ENCODE measurements at regions of chr3 and their contacts with region 1.

Region 1: GRCh38 chr3:14829811-14830210 is 11.0 kb downstream of the FGD5 start:
- DNase-seq: no peak
- H3K4me3 ChIP-seq: no peak overlapping the region
- CTCF ChIP-seq: no peak

Region 2: GRCh38 chr3:14651440-14652251 is 178.2 kb before region 1 on chr3 and contains the start of gene CCDC174:
- in situ Hi-C with region 1: no loop called
- DNase-seq: peak; percentile 96
- H3K4me3 ChIP-seq: peak within 1 kb of the TSS; percentile 98
- CTCF ChIP-seq: no peak

Region 3: GRCh38 chr3:14787630-14788029 is 42.2 kb before region 1 on chr3:
- in situ Hi-C with region 1: loop called (anchors 5 kb)
- DNase-seq: no peak
- H3K4me3 ChIP-seq: no peak overlapping the region
- CTCF ChIP-seq: no peak

Measured in astrocyte of the cerebellum (primary cell).